Naive thymus-derived CD4-positive, alpha-beta T cell (primary cell): ENCODE measurements at regions of chr4 and their contacts with region 1.

Region 1: GRCh38 chr4:176195184-176195978 is at the start of gene SPATA4:
- DNase-seq: peak; percentile 85 to 92 (median 91)
- ATAC-seq: peak; percentile 99
- H3K4me3 ChIP-seq: peak within 1 kb of the TSS; percentile 83
- H3K4me3 Mint-ChIP-seq: peak within 1 kb of the TSS; percentile 83 to 94 (median 90)
- H3K27ac ChIP-seq: peak within 1 kb of the TSS; percentile 65
- H3K27ac Mint-ChIP-seq: peak within 1 kb of the TSS; percentile 75 to 96 (median 93)
- H3K4me1 ChIP-seq: peaks cover 5 to 9% of the 10 kb centered on the region in 2 donors
- H3K4me1 Mint-ChIP-seq: peaks cover 3 to 12% (median 10%) of the 10 kb centered on the region in 7 donors
- H3K27me3 ChIP-seq: peaks cover 0 to 12% of the 10 kb centered on the region in 2 donors
- H3K27me3 Mint-ChIP-seq: peaks cover 4 to 43% (median 16%) of the 10 kb centered on the region in 5 donors
- total RNA-seq, gene SPATA4: not detected

Region 2: DNA sequence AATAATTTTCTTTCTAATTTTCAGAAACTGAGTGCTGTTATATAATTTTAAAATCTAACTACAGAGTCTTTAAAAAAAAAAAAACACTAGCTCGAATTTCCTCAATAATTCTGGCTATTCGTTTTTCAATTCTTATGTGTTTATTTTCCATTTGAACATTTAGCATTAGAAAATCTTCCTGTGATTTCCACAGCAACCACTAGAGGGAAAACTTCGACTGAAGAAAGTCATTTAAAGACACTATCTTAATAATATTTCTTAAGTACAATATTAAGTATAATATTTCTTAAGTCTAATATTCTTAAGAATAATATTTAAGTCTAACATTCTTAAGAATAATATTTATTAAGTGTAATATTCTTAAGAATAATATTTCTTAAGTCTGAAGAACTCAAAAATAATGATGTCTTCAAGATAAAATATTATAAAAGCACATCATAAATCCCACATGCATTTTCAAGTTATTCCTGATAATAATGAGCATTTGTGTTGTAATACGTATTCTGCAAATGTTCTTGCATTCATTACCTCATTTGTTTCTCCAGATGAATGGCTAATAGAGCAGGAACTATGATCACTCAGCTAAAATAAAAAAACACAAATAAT is 248.2 kb before region 1 on chr4:
- CTCF ChIA-PET with region 1: no interaction called
- POLR2A ChIA-PET with region 1: no interaction called
- intact Hi-C with region 1: loop called in 1 of 2 experiments (anchors 5 kb)
- DNase-seq: peak in 3 of 9 donors; percentile 1 to 8 (median 4)
- ATAC-seq: no peak
- H3K4me3 ChIP-seq: no peak overlapping the region
- H3K4me3 Mint-ChIP-seq: peak overlapping the region in 1 of 10 donors; percentile 44
- H3K27ac ChIP-seq: no peak overlapping the region
- H3K27ac Mint-ChIP-seq: no peak overlapping the region
- H3K4me1 ChIP-seq: peaks cover 0 to 3% of the 10 kb centered on the region in 2 donors
- H3K4me1 Mint-ChIP-seq: peaks cover 0 to 10% (median 6%) of the 10 kb centered on the region in 7 donors
- H3K27me3 ChIP-seq: no peaks in the 10 kb centered on the region
- H3K27me3 Mint-ChIP-seq: peaks cover 10 to 27% (median 13%) of the 10 kb centered on the region in 5 donors

Region 3: DNA sequence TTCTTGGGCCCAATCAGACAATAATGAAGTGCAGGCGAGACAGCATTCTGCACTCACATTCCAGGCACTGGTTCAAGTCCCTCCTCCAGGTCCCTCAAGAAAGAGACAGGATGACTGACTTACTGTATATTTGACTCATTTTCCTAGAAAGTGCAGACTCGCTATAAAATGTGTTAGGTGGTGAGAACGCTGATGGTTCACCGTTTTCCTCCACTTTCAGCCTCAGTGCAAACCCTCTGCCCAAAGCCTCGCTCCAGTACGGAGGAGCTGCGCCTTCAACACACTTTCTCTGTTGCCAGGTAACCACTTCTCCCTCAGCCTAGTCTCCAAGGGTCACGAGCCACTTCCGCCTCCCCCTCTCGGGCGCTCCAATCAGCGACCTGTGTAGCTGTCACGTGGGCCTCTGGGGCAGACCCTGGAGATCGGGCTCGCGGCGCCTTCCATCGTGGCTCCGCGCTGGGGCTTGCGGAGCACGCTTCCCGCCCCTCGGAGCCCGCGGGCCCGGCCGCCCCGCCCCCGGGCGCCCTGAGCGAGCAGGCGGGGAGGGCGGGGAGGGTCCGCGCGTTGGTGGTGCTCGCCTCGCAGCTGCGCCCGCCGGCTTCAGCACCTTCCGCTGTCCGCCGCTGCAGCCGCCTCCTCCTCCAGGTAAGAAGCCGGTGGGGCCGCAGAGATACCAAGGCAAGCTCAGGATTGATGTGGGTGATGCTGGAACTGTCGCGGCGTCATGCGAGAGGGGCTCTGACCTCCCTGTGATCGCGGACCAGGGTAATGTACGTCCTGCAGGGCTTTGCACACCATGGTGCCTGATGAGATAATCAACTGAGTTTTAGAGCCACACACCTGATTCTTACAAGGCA is 129.7 kb before region 1 on chr4 and contains the start of gene WDR17:
- CTCF ChIA-PET with region 1: no interaction called
- POLR2A ChIA-PET with region 1: no interaction called
- intact Hi-C with region 1: loop called (anchors 1 kb)
- DNase-seq: peak; percentile 42 to 81 (median 70)
- ATAC-seq: peak; percentile 95
- H3K4me3 ChIP-seq: peak within 1 kb of the TSS; percentile 70
- H3K4me3 Mint-ChIP-seq: peak within 1 kb of the TSS; percentile 82 to 95 (median 92)
- H3K27ac ChIP-seq: peak within 1 kb of the TSS; percentile 12
- H3K27ac Mint-ChIP-seq: peak within 1 kb of the TSS in 6 of 9 donors; percentile 15 to 76 (median 70)
- H3K4me1 ChIP-seq: peaks cover 4 to 5% of the 10 kb centered on the region in 2 donors
- H3K4me1 Mint-ChIP-seq: peaks cover 11 to 15% (median 13%) of the 10 kb centered on the region in 7 donors
- H3K27me3 ChIP-seq: no peaks in the 10 kb centered on the region
- H3K27me3 Mint-ChIP-seq: peaks cover 0 to 38% (median 25%) of the 10 kb centered on the region in 5 donors
- total RNA-seq, gene WDR17: 0.59 to 1.5 (median 1.1) TPM

Region 4: GRCh38 chr4:176262243-176262642 is 66.9 kb after region 1 on chr4:
- CTCF ChIA-PET with region 1: no interaction called
- POLR2A ChIA-PET with region 1: no interaction called
- intact Hi-C with region 1: no loop called
- DNase-seq: no peak
- ATAC-seq: no peak
- H3K4me3 ChIP-seq: no peak overlapping the region
- H3K4me3 Mint-ChIP-seq: no peak overlapping the region
- H3K27ac ChIP-seq: no peak overlapping the region
- H3K27ac Mint-ChIP-seq: no peak overlapping the region
- H3K4me1 ChIP-seq: no peaks in the 10 kb centered on the region
- H3K4me1 Mint-ChIP-seq: no peaks in the 10 kb centered on the region
- H3K27me3 ChIP-seq: no peaks in the 10 kb centered on the region
- H3K27me3 Mint-ChIP-seq: peaks cover 0 to 12% (median 4%) of the 10 kb centered on the region in 5 donors

Region 5: DNA sequence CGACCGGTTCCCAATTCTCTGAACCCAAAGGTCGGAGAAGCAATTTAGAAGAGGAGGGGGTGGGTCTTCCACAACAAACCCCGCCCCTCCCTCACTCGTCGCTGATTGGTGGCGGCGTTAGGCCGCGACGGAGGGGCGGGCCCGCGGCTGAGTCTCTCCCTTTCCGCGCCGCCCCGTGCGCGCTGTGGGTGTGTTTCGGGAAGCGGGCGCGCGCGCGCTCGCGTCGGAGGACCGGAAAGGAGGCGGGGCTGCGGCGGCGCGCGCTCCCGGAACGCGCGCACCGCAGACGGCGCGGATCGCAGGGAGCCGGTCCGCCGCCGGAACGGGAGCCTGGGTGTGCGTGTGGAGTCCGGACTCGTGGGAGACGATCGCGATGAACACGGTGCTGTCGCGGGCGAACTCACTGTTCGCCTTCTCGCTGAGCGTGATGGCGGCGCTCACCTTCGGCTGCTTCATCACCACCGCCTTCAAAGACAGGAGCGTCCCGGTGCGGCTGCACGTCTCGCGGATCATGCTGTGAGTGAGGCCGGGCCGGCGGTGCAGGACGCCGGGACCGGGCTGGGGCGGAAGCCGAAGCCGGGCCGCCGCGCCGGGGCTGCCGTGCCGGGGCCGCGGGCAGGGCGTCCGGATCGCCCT is 124.4 kb after region 1 on chr4 and contains the start of gene SPCS3:
- CTCF ChIA-PET with region 1: no interaction called
- POLR2A ChIA-PET with region 1: interaction called, 12 read pairs
- intact Hi-C with region 1: loop called (anchors 1 kb)
- DNase-seq: peak; percentile 92 to 95 (median 95)
- ATAC-seq: peak; percentile 95
- H3K4me3 ChIP-seq: peak within 1 kb of the TSS; percentile 85
- H3K4me3 Mint-ChIP-seq: peak within 1 kb of the TSS; percentile 83 to 97 (median 92)
- H3K27ac ChIP-seq: peak within 1 kb of the TSS; percentile 91
- H3K27ac Mint-ChIP-seq: peak within 1 kb of the TSS; percentile 91 to 97 (median 92)
- H3K4me1 ChIP-seq: peaks cover 32 to 35% of the 10 kb centered on the region in 2 donors
- H3K4me1 Mint-ChIP-seq: peaks cover 32 to 62% (median 47%) of the 10 kb centered on the region in 7 donors
- H3K27me3 ChIP-seq: no peaks in the 10 kb centered on the region
- H3K27me3 Mint-ChIP-seq: peaks cover 0 to 4% (median 0%) of the 10 kb centered on the region in 5 donors
- total RNA-seq, gene SPCS3: 117 to 215 (median 153) TPM

Region 6: DNA sequence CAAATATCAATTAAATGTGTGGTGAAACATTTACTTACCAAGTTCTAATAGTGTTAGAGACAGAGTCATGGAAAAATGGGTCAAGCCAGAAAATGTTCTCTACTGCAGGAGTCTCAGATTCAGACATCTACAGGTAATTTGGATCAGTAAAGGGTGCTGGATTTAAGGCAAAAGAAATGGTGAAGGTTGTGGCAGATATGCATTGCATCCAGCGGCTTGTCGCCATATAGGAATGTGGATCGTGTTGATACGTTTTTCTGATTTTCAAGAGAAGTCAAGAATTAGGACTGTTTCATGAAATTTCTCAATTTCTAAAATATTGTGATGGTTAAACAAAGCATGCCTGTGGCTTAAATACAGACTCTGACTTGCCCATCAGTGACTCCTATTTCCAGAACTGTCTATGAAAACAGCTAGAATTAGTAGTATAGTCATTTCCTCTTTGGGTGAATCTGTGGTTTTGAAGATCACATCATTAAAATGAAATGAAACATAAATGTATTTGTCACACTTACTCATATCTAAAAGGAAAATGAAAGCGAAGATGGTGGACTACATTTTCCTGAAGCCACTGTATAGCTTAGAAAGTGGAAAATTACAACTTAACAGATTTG is 707.4 kb after region 1 on chr4:
- CTCF ChIA-PET with region 1: no interaction called
- POLR2A ChIA-PET with region 1: no interaction called
- intact Hi-C with region 1: loop called in 1 of 2 experiments (anchors 2 kb)
- DNase-seq: no peak
- ATAC-seq: no peak
- H3K4me3 ChIP-seq: no peak overlapping the region
- H3K4me3 Mint-ChIP-seq: peak overlapping the region in 1 of 10 donors; percentile 45
- H3K27ac ChIP-seq: no peak overlapping the region
- H3K27ac Mint-ChIP-seq: peak overlapping the region in 1 of 9 donors; percentile 31
- H3K4me1 ChIP-seq: no peaks in the 10 kb centered on the region
- H3K4me1 Mint-ChIP-seq: peaks cover 0 to 17% (median 0%) of the 10 kb centered on the region in 7 donors
- H3K27me3 ChIP-seq: no peaks in the 10 kb centered on the region
- H3K27me3 Mint-ChIP-seq: peaks cover 0 to 6% (median 0%) of the 10 kb centered on the region in 5 donors